Mammary epithelial cell (primary cell): ENCODE measurements at regions of chr2 and their contacts with region 1.

Region 1: GRCh38 chr2:64359892-64360657 is 93.9 kb upstream of the LGALSL start:
- DNase-seq: peak; percentile 98
- H3K4me3 ChIP-seq: no peak overlapping the region
- H3K27ac ChIP-seq: peak overlapping the region; percentile 86
- H3K4me1 ChIP-seq: peaks cover 59% of the 10 kb centered on the region
- H3K27me3 ChIP-seq: no peaks in the 10 kb centered on the region
- CTCF ChIP-seq: peak in 1 of 2 donors; percentile 25

Region 2: GRCh38 chr2:64291181-64291580 is 68.9 kb before region 1 on chr2:
- CTCF ChIA-PET with region 1: no interaction called
- dilution Hi-C with region 1: no loop called
- in situ Hi-C with region 1: no loop called
- intact Hi-C with region 1: no loop called
- DNase-seq: peak; percentile 92
- H3K4me3 ChIP-seq: no peak overlapping the region
- H3K27ac ChIP-seq: peak overlapping the region; percentile 28
- H3K4me1 ChIP-seq: peaks cover 13% of the 10 kb centered on the region
- H3K27me3 ChIP-seq: no peaks in the 10 kb centered on the region
- CTCF ChIP-seq: no peak

Region 3: DNA sequence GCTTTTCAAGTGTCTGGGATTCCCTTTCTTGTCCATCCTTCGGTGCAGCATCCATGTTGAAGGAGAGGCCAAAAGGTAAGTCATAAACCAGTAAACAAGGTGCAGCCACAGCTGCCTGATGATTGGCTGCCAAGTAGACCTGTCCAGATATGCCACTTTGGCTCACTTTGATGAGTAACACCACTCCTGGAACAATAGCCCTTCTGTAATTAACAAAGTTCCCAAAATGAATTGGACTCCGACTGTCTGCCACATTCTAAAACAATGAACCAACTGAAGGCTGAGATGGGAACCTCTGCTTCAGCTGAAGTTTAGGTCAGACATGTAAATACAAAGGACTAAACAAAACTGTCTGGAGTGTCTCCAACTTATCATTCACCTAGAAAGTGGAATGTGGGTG is 11.7 kb after region 1 on chr2:
- CTCF ChIA-PET with region 1: no interaction called
- dilution Hi-C with region 1: no loop called
- in situ Hi-C with region 1: no loop called
- intact Hi-C with region 1: loop called (anchors 1 kb)
- DNase-seq: peak; percentile 96
- H3K4me3 ChIP-seq: no peak overlapping the region
- H3K27ac ChIP-seq: peak overlapping the region; percentile 88
- H3K4me1 ChIP-seq: peaks cover 51% of the 10 kb centered on the region
- H3K27me3 ChIP-seq: no peaks in the 10 kb centered on the region
- CTCF ChIP-seq: no peak

Region 4: GRCh38 chr2:64391424-64391823 is 31.3 kb after region 1 on chr2:
- CTCF ChIA-PET with region 1: no interaction called
- dilution Hi-C with region 1: no loop called
- in situ Hi-C with region 1: no loop called
- intact Hi-C with region 1: no loop called
- DNase-seq: no peak
- H3K4me3 ChIP-seq: no peak overlapping the region
- H3K27ac ChIP-seq: no peak overlapping the region
- H3K4me1 ChIP-seq: no peaks in the 10 kb centered on the region
- H3K27me3 ChIP-seq: no peaks in the 10 kb centered on the region
- CTCF ChIP-seq: no peak

Region 5: GRCh38 chr2:64410671-64411070 is 50.6 kb after region 1 on chr2:
- CTCF ChIA-PET with region 1: no interaction called
- dilution Hi-C with region 1: no loop called
- in situ Hi-C with region 1: no loop called
- intact Hi-C with region 1: no loop called
- DNase-seq: no peak
- H3K4me3 ChIP-seq: no peak overlapping the region
- H3K27ac ChIP-seq: no peak overlapping the region
- H3K4me1 ChIP-seq: peaks cover 7% of the 10 kb centered on the region
- H3K27me3 ChIP-seq: no peaks in the 10 kb centered on the region
- CTCF ChIP-seq: no peak

Region 6: GRCh38 chr2:64453770-64454385 is 93.8 kb after region 1 on chr2 and contains the start of gene LGALSL:
- CTCF ChIA-PET with region 1: no interaction called
- dilution Hi-C with region 1: no loop called
- in situ Hi-C with region 1: no loop called
- intact Hi-C with region 1: loop called (anchors 1 kb)
- DNase-seq: peak; percentile 71
- H3K4me3 ChIP-seq: peak within 1 kb of the TSS; percentile 67 to 78 (median 68)
- H3K27ac ChIP-seq: peak within 1 kb of the TSS; percentile 91
- H3K4me1 ChIP-seq: peaks cover 23% of the 10 kb centered on the region
- H3K27me3 ChIP-seq: no peaks in the 10 kb centered on the region
- CTCF ChIP-seq: no peak
- total RNA-seq, gene LGALSL: 11.8 to 23.3 TPM

Region 7: GRCh38 chr2:64622443-64623241 is 262.6 kb after region 1 on chr2:
- CTCF ChIA-PET with region 1: no interaction called
- dilution Hi-C with region 1: no loop called
- in situ Hi-C with region 1: no loop called
- intact Hi-C with region 1: no loop called
- DNase-seq: no peak
- H3K4me3 ChIP-seq: no peak overlapping the region
- H3K27ac ChIP-seq: no peak overlapping the region
- H3K4me1 ChIP-seq: no peaks in the 10 kb centered on the region
- H3K27me3 ChIP-seq: no peaks in the 10 kb centered on the region
- CTCF ChIP-seq: no peak

Region 8: DNA sequence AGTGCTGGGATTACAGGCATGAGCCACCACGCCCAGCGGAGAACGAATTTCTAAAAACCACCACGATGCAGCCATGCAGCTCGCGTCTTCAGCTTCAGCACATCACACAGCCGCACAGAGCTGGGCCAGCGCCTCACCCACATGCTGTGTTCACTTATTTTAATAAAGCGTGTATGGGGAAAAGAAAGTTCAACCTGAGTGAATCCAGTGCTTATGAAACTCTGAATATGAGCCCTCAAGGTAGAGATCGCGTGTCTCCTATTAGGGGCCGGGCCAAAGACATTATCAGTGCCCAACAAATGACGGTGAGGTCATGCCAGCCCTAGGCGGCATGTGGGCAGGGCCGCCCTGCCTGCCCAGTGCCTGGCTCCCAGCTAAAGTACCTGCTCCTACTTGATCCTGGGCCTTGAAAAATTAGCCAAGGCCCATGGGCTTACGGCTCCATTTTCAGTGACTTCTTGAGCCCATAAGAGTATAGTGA is 1028.0 kb after region 1 on chr2:
- CTCF ChIA-PET with region 1: no interaction called
- dilution Hi-C with region 1: no loop called
- in situ Hi-C with region 1: no loop called
- intact Hi-C with region 1: loop called (anchors 5 kb)
- DNase-seq: peak; percentile 95
- H3K4me3 ChIP-seq: peak overlapping the region in 2 of 3 experiments; percentile 14 to 26
- H3K27ac ChIP-seq: peak overlapping the region; percentile 93
- H3K4me1 ChIP-seq: peaks cover 83% of the 10 kb centered on the region
- H3K27me3 ChIP-seq: no peaks in the 10 kb centered on the region
- CTCF ChIP-seq: no peak